Activated B cell treated with CpG ODN at 0.5 μM for 24 hours (primary cell): ENCODE measurements at regions of chr1 and their contacts with region 1.

Region 1: GRCh38 chr1:174276087-174276486 is 116.8 kb downstream of the RABGAP1L start:
- DNase-seq: no peak
- ATAC-seq: peak; percentile 50
- H3K4me3 Mint-ChIP-seq: no peak overlapping the region
- H3K27ac Mint-ChIP-seq: no peak overlapping the region
- H3K4me1 Mint-ChIP-seq: peaks cover 46% of the 10 kb centered on the region
- H3K27me3 Mint-ChIP-seq: no peaks in the 10 kb centered on the region
- CTCF ChIP-seq: no peak

Region 2: DNA sequence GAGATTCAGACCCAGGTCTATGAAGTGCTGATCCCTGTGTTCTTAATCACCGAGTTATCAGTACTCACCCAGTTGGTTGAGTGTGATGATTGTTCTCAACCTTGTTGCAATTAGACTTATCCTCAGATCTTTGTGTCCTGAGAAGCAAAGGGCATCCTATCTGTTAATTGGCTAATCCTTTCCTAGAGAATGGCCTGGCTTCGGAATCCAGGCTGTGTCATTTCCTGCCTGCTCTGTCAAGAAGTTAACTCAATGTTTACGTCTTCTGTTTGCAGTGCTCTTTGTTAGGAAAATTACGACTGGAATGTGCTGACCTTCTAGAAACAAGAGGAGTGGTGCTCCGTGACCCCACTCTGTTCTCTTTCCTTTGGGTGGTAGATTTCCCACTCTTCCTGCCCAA is 423.0 kb before region 1 on chr1:
- CTCF ChIA-PET with region 1: no interaction called
- POLR2A ChIA-PET with region 1: no interaction called
- intact Hi-C with region 1: no loop called
- DNase-seq: no peak
- ATAC-seq: no peak
- H3K4me3 Mint-ChIP-seq: no peak overlapping the region
- H3K27ac Mint-ChIP-seq: no peak overlapping the region
- H3K4me1 Mint-ChIP-seq: no peaks in the 10 kb centered on the region
- H3K27me3 Mint-ChIP-seq: no peaks in the 10 kb centered on the region
- CTCF ChIP-seq: no peak

Region 3: GRCh38 chr1:173954179-173954578 is 321.9 kb before region 1 on chr1:
- CTCF ChIA-PET with region 1: no interaction called
- POLR2A ChIA-PET with region 1: no interaction called
- intact Hi-C with region 1: no loop called
- DNase-seq: no peak
- ATAC-seq: no peak
- H3K4me3 Mint-ChIP-seq: no peak overlapping the region
- H3K27ac Mint-ChIP-seq: no peak overlapping the region
- H3K4me1 Mint-ChIP-seq: no peaks in the 10 kb centered on the region
- H3K27me3 Mint-ChIP-seq: no peaks in the 10 kb centered on the region
- CTCF ChIP-seq: no peak

Region 4: GRCh38 chr1:174308604-174309003 is 32.5 kb after region 1 on chr1:
- CTCF ChIA-PET with region 1: no interaction called
- POLR2A ChIA-PET with region 1: no interaction called
- intact Hi-C with region 1: loop called (anchors 5 kb)
- DNase-seq: no peak
- ATAC-seq: no peak
- H3K4me3 Mint-ChIP-seq: no peak overlapping the region
- H3K27ac Mint-ChIP-seq: no peak overlapping the region
- H3K4me1 Mint-ChIP-seq: peaks cover 19% of the 10 kb centered on the region
- H3K27me3 Mint-ChIP-seq: no peaks in the 10 kb centered on the region
- CTCF ChIP-seq: no peak